ENCODE measurements at regions of chr14 and their contacts with region 1.

Region 1: DNA sequence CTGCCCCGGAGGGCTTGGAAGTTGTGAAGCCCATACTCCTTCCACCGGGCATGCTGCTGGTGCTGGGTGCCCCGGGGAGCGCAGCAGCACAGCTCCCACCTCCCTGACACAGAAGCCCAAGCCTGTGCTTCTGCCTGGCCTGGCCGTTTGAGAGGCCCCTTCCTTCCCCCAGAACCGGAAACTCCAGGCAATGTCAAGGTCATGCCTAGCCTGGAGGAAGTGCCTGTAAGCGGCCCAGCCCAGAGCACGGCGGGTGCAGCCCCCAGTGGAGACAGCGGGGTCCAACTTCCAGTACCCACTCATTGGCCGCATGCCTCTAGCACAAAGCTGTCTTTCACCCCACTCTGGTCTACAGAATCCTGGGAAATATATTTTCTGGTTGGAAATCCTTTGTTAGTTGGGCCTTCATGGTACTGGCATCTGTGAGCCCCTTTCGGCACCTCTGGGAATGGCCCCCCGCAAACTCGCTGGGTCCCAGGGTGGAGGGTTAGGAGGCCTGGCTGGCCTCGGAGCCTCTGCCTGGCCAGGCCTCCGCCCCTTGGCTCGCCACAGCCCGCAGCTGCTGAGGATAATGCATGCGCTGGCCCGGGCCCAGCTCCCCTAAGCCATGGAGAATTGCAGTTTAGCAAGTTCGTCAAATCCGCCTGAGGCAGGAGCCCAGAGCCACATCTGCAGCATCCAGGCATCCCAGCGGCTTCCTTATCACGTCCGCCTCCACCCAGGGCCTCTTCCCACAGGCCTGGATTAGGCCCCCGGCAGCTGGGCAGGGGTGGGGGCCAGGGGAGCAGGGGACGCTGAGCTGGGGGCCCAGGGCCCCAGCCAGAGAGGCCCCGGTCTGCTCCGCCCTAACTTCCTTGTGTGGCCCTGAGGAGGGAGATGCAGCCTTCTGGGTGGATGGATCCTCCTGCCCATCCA is 48.9 kb upstream of the DLK1 start:
- DNase-seq: peak; percentile 53
- H3K4me3 ChIP-seq: no peak overlapping the region
- H3K27me3 ChIP-seq: peaks cover 9% of the 10 kb centered on the region
- CTCF ChIP-seq: no peak

Region 2: GRCh38 chr14:100662879-100663760 is 14.7 kb before region 1 on chr14:
- CTCF ChIA-PET with region 1: interaction called, 33 read pairs
- POLR2A ChIA-PET with region 1: no interaction called
- DNase-seq: no peak
- H3K4me3 ChIP-seq: no peak overlapping the region
- H3K27me3 ChIP-seq: peaks cover 26% of the 10 kb centered on the region
- CTCF ChIP-seq: peak; percentile 89

Region 3: GRCh38 chr14:100825713-100826331 is 148.0 kb after region 1 on chr14 and contains the start of gene MEG3:
- CTCF ChIA-PET with region 1: no interaction called
- POLR2A ChIA-PET with region 1: interaction called, 13 read pairs
- DNase-seq: peak; percentile 22
- H3K4me3 ChIP-seq: peak within 1 kb of the TSS; percentile 82
- H3K27me3 ChIP-seq: no peaks in the 10 kb centered on the region
- CTCF ChIP-seq: no peak
- polyA plus RNA-seq, gene MEG3: 191 and 234 TPM in 2 replicates

Measured in BJ (cell line).